Colonic mucosa (tissue), 4 donors: ENCODE measurements at regions of chr5 and their contacts with region 1.

Region 1: DNA sequence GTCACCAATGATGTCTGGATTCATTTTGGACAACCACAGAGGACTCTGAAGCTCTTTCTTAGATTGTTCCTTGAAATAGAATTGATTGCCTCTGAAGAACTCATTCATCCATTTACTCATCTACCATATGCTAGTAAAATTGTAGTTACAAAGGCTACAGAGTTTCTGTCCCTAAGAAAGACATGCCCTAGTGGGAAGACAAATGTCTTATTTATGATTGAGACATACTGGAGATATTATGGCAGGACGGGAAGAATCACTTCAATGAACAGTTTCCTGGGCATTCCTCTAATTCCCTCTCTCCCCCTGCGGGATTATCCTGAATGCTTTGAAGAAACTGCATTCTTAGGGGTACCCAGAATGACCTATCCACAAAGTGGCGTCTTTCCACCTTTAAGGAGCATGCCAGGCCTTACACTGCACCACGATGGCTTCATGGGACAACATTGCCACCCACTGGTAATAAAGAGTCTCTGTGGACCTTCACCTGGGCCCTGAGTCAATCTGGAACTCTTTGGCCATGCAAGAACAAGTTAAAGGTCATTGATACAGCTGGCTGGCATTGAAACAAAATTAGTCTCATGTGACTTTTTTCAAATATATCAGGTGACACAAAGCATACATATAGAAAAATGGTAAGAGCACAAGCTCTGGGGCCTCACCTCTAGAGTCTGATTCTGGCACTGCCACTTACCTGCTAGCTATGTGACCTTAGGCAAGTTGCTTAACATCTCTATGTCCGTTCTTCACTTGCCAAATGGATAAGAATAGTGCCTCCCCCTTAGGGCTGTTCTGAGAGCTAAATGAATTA is 32.1 kb downstream of the ANKRD55 start:
- DNase-seq: peak; percentile 57
- H3K4me3 ChIP-seq: no peak overlapping the region
- H3K27ac ChIP-seq: no peak overlapping the region
- H3K4me1 ChIP-seq: no peaks in the 10 kb centered on the region
- H3K27me3 ChIP-seq: no peaks in the 10 kb centered on the region
- CTCF ChIP-seq: peak; percentile 67

Region 2: GRCh38 chr5:55934115-55934613 is 266.9 kb before region 1 on chr5:
- intact Hi-C with region 1: loop called (anchors 2 kb)
- DNase-seq: no peak
- H3K4me3 ChIP-seq: no peak overlapping the region
- H3K27ac ChIP-seq: no peak overlapping the region
- H3K4me1 ChIP-seq: no peaks in the 10 kb centered on the region
- H3K27me3 ChIP-seq: no peaks in the 10 kb centered on the region
- CTCF ChIP-seq: no peak

Region 3: DNA sequence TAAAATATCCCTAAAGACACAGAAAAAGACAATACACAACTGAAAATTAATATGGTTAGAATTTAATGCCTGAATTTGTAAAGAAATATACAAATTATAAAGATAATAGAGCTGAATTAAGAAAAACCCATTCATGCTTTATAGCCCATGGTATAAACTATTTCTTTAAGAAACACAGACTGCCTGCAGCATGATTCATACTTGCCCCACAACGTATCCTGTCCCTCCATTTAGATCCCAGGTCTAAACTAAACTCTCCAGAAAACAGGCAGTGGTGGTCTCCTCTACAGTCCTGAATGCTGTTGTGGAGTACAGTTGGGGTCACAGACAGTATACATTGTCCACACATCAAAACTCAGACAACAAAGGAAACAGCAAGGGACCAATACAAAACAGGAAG is 231.1 kb before region 1 on chr5:
- intact Hi-C with region 1: loop called (anchors 10 kb)
- DNase-seq: no peak
- H3K4me3 ChIP-seq: no peak overlapping the region
- H3K27ac ChIP-seq: no peak overlapping the region
- H3K4me1 ChIP-seq: no peaks in the 10 kb centered on the region
- H3K27me3 ChIP-seq: no peaks in the 10 kb centered on the region
- CTCF ChIP-seq: no peak